Activated CD4-positive, alpha-beta T cell treated with anti-CD3 and anti-CD28 coated beads, Interleukin-2, amount 10 ng/mL, durations not matched to agents 24 days and 14 days (primary cell): ENCODE measurements at regions of chr10 and their contacts with region 1.

Region 1: GRCh38 chr10:74502963-74503608 is 323.3 kb upstream of the KAT6B start:
- DNase-seq: no peak
- H3K4me3 Mint-ChIP-seq: peak overlapping the region; percentile 19
- H3K27ac Mint-ChIP-seq: peak overlapping the region; percentile 83
- H3K4me1 Mint-ChIP-seq: peaks cover 31% of the 10 kb centered on the region
- H3K27me3 Mint-ChIP-seq: no peaks in the 10 kb centered on the region

Region 2: DNA sequence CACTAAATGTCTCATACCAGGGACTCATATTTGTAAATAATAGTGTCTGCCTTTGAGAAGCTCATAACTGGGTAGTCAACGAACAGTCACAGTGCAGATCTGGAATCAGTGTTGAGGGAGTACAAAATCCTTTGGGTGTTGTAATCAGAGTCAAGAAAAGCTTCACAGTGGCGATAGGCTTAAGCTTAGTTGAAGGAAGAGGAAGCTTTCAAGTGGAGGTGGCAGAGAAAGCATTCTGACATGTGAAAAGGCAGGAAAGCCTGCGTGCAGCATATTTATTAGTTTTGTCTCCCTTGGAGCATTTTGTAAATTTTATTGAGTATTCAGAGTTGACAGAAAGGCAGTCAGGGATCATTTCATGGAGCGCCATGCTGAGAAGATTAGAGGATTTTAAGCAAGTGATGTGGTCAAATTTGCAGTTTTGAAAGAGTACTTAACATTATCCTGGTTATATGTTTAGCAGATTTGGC is 247.2 kb before region 1 on chr10:
- intact Hi-C with region 1: no loop called
- DNase-seq: no peak
- H3K4me3 Mint-ChIP-seq: no peak overlapping the region
- H3K27ac Mint-ChIP-seq: no peak overlapping the region
- H3K4me1 Mint-ChIP-seq: peaks cover 4% of the 10 kb centered on the region
- H3K27me3 Mint-ChIP-seq: no peaks in the 10 kb centered on the region

Region 3: DNA sequence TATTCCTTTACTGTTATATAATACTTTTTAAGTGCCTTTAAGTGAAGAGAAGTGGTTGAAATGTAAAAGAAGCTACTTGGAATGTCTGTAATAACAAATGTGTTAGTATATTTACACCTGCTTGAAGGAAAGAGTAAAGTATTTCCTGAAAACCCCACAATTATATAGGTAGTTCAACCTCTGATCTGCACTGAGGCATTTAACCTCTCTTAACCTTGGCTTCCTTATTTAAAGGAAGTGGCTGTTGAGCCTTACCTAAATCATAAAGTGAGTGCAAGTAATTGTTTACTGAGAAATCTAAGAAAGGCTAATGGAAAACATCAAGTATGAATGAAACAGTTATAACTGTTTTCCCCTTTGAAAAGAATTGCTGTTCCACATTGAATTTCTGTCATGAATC is 57.6 kb before region 1 on chr10:
- intact Hi-C with region 1: loop called (anchors 10 kb)
- DNase-seq: no peak
- H3K4me3 Mint-ChIP-seq: no peak overlapping the region
- H3K27ac Mint-ChIP-seq: no peak overlapping the region
- H3K4me1 Mint-ChIP-seq: peaks cover 3% of the 10 kb centered on the region
- H3K27me3 Mint-ChIP-seq: no peaks in the 10 kb centered on the region

Region 4: GRCh38 chr10:74991440-74992130 is 488.5 kb after region 1 on chr10:
- intact Hi-C with region 1: no loop called
- DNase-seq: no peak
- H3K4me3 Mint-ChIP-seq: no peak overlapping the region
- H3K27ac Mint-ChIP-seq: no peak overlapping the region
- H3K4me1 Mint-ChIP-seq: peaks cover 21% of the 10 kb centered on the region
- H3K27me3 Mint-ChIP-seq: no peaks in the 10 kb centered on the region